ENCODE measurements at regions of chr12 and their contacts with region 1.

Region 1: DNA sequence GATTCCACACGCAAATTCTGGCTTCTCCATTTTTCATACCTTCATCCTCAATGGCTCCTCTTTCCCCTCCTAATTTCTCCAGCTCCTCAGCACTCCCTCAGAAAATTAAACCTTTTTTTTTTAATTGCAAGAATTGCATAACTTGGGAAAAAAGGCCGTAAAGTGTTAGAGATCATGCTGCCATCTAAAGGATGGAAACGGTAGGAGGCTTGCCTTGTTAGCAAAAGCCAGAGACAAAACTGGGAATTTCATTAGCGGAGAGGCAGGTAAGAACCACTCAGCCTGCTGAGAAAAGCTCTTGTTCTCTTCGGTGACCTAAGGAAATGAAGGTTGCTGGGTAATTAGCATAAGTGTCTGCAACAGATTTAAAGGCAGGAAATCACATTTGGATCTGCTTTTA is 204.3 kb downstream of the AEBP2 start:
- DNase-seq: peak; percentile 68
- ATAC-seq: peak; percentile 56
- H3K4me3 ChIP-seq: no peak overlapping the region
- H3K27ac ChIP-seq: no peak overlapping the region
- H3K4me1 ChIP-seq: peaks cover 5% of the 10 kb centered on the region; the same call in 1 of the 2 replicates
- H3K27me3 ChIP-seq: no peaks in the 10 kb centered on the region
- CTCF ChIP-seq: peak; percentile 70
- POLR2A ChIP-seq: no peak
- RAD21 ChIP-seq: peak; percentile 64

Region 2: GRCh38 chr12:19369691-19370148 is 273.9 kb before region 1 on chr12:
- CTCF ChIA-PET with region 1: no interaction called
- POLR2A ChIA-PET with region 1: no interaction called
- dilution Hi-C with region 1: no loop called
- in situ Hi-C with region 1: loop called (anchors 10 kb)
- intact Hi-C with region 1: no loop called
- DNase-seq: peak; percentile 84
- ATAC-seq: peak; percentile 72
- H3K4me3 ChIP-seq: no peak overlapping the region
- H3K27ac ChIP-seq: peak overlapping the region; percentile 2; the same call in 1 of the 2 replicates
- H3K4me1 ChIP-seq: peaks cover 2% of the 10 kb centered on the region; the same call in 1 of the 2 replicates
- H3K27me3 ChIP-seq: no peaks in the 10 kb centered on the region
- CTCF ChIP-seq: no peak
- POLR2A ChIP-seq: peak; percentile 41; the same call in 1 of the 2 replicates
- RAD21 ChIP-seq: no peak

Region 3: GRCh38 chr12:19507823-19508222 is 135.8 kb before region 1 on chr12:
- CTCF ChIA-PET with region 1: no interaction called
- POLR2A ChIA-PET with region 1: no interaction called
- dilution Hi-C with region 1: no loop called
- in situ Hi-C with region 1: no loop called
- intact Hi-C with region 1: loop called (anchors 5 kb)
- DNase-seq: peak; percentile 19
- ATAC-seq: peak; percentile 70
- H3K4me3 ChIP-seq: no peak overlapping the region
- H3K27ac ChIP-seq: no peak overlapping the region
- H3K4me1 ChIP-seq: peaks cover 5% of the 10 kb centered on the region; the same call in 1 of the 2 replicates
- H3K27me3 ChIP-seq: no peaks in the 10 kb centered on the region
- CTCF ChIP-seq: peak; percentile 37
- POLR2A ChIP-seq: no peak
- RAD21 ChIP-seq: peak; percentile 38

Region 4: DNA sequence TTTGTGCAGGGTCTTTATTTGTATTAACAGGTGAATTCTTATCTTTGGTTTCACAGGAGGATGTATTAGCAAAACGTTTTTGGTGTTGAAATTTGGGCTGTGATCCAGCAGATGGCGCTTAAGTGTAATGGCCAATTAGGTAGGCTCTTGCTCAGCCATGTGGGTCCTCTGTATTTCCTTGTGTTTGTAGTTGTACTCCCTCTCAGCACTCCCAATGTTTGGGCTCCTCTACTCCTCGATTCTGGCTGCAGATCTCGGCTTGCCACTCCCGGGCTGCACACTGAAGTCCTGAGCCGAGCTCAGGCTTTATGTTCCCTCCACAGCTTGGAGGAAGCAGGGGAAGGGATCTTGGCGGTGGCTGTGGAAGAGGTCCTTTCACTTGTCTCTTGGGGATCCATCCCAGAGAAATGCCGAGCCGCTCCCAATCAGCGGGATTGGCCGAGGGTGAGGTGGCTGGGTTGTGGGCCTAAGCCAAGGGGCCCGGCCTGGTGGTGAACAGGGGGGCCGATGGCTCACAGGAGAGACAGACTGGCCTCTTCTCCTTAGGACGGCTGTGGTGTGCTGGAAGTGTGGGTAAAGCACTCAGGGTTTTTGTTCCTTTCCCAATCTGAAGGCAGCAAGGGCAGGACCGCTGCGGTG is 70.6 kb before region 1 on chr12:
- CTCF ChIA-PET with region 1: interaction called, 11 read pairs
- POLR2A ChIA-PET with region 1: no interaction called
- dilution Hi-C with region 1: no loop called
- in situ Hi-C with region 1: no loop called
- intact Hi-C with region 1: loop called (anchors 1 kb)
- DNase-seq: peak; percentile 66
- ATAC-seq: peak; percentile 21; the same call in 1 of the 2 replicates
- H3K4me3 ChIP-seq: no peak overlapping the region
- H3K27ac ChIP-seq: peak overlapping the region; percentile 61
- H3K4me1 ChIP-seq: peaks cover 24% of the 10 kb centered on the region
- H3K27me3 ChIP-seq: no peaks in the 10 kb centered on the region
- CTCF ChIP-seq: peak; percentile 58
- POLR2A ChIP-seq: no peak
- RAD21 ChIP-seq: peak; percentile 60

Region 5: GRCh38 chr12:20463913-20464524 is 820.4 kb after region 1 on chr12:
- CTCF ChIA-PET with region 1: no interaction called
- POLR2A ChIA-PET with region 1: no interaction called
- dilution Hi-C with region 1: no loop called
- in situ Hi-C with region 1: no loop called
- intact Hi-C with region 1: no loop called
- DNase-seq: peak; percentile 16
- ATAC-seq: peak; percentile 56
- H3K4me3 ChIP-seq: no peak overlapping the region
- H3K27ac ChIP-seq: no peak overlapping the region
- H3K4me1 ChIP-seq: peaks cover 5% of the 10 kb centered on the region; the same call in 1 of the 2 replicates
- H3K27me3 ChIP-seq: no peaks in the 10 kb centered on the region
- CTCF ChIP-seq: peak; percentile 63
- POLR2A ChIP-seq: no peak
- RAD21 ChIP-seq: peak; percentile 60